H1 (cell line): ENCODE measurements at regions of chr22 and their contacts with region 1.

Region 1: DNA sequence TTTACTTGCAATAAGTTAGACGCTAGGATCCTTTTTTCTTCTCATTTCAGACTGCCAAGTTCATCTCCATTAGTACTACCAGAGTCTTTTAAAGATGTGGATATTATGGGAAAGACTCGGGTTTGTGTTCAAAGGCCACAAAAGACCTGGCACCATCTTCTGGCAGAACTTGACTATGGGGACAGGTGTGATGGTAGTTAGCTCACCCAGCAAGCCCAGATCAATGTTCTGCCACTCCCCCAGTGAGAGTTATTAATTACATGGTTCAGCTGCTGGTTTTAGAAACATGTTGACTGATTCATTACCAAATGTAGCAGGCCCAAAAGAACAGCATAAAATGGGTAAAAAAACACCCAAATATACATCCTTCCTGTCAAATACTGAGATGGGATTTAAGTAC is 333.5 kb upstream of the PITPNB start:
- DNase-seq: no peak
- H3K4me3 ChIP-seq: no peak overlapping the region
- H3K27ac ChIP-seq: no peak overlapping the region
- H3K4me1 ChIP-seq: no peaks in the 10 kb centered on the region
- H3K27me3 ChIP-seq: peaks cover 2 to 16% (median 8%) of the 10 kb centered on the region in 4 experiments
- CTCF ChIP-seq: no peak
- EP300 ChIP-seq: no peak
- POLR2A ChIP-seq: no peak
- RAD21 ChIP-seq: no peak

Region 2: DNA sequence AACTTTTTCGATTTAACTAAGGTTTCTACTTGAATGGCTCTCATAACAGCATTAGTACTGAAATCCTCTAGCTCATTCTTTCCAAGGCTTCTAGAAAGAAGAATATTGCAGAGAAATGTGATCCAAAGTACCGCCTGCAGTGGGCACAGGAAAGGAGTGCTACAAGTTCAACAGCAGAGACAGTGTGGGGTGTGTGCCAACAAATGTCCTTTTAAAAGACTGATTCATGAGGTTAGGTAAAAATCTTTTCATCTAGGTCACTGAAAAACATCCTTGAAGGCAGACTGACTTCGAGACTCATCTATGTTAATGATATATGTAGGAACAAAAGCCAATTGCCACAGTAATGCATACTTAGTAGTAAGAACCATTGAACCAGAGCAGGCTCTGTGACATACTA is 15.6 kb after region 1 on chr22:
- CTCF ChIA-PET with region 1: interaction called, 11 read pairs
- POLR2A ChIA-PET with region 1: interaction called, 3 read pairs
- DNase-seq: no peak
- H3K4me3 ChIP-seq: no peak overlapping the region
- H3K27ac ChIP-seq: no peak overlapping the region
- H3K4me1 ChIP-seq: 0 out of 7 replicates have a peak, but pooled peaks cover 0 to 2% (median 0%) of the 10 kb centered on the region in 4 experiments
- H3K27me3 ChIP-seq: no peaks in the 10 kb centered on the region
- CTCF ChIP-seq: no peak
- EP300 ChIP-seq: no peak
- POLR2A ChIP-seq: no peak
- RAD21 ChIP-seq: no peak

Region 3: DNA sequence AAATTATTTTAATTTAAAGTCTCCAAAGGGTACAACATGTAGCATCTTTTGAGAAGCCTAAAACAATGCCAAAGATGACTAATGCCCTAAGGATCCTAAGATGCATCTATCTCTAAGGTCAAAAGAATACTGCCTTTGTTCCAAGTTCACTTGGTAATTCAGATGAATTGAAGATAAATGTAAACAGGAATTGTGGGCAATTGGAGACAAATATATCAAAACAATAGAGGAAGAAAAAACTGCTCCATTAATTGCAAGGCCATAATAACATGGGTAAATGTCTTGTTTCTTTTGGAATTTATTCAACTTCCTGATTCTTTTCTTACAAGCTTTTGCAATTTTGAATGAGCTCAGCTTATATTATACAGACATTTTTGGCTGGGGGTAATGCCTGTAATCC is 88.5 kb after region 1 on chr22:
- CTCF ChIA-PET with region 1: no interaction called
- POLR2A ChIA-PET with region 1: no interaction called
- DNase-seq: no peak
- H3K4me3 ChIP-seq: no peak overlapping the region
- H3K27ac ChIP-seq: no peak overlapping the region
- H3K4me1 ChIP-seq: no peaks in the 10 kb centered on the region
- H3K27me3 ChIP-seq: no peaks in the 10 kb centered on the region
- CTCF ChIP-seq: no peak
- EP300 ChIP-seq: no peak
- POLR2A ChIP-seq: no peak
- RAD21 ChIP-seq: no peak

Region 4: DNA sequence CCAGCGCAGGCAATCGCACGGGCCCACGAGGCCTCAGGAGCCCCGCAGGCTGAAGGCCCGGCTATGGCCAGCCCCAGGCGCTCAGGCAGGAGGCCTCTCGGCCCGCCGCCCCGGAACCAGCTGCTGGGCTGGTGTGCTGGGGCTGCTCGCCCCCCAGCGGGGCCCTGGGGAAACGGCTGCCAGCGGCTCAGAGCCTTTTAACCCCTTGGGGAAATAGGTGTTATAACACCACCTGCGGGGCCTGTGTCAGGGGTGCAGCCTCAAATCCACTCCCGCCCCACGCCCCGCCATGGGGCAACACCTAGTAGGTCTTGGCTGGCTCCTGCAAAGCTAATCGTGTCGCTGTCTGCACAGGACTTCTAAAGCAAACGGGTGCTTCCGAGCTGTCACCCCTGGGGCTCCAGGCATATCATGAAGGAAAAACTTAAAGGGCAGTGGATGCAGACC is 189.7 kb after region 1 on chr22:
- CTCF ChIA-PET with region 1: interaction called, 10 read pairs
- POLR2A ChIA-PET with region 1: no interaction called
- DNase-seq: peak; percentile 69 to 85
- H3K4me3 ChIP-seq: peak overlapping the region; percentile 64 to 75 (median 72)
- H3K27ac ChIP-seq: no peak overlapping the region
- H3K4me1 ChIP-seq: peaks cover 0 to 3% (median 1%) of the 10 kb centered on the region in 4 experiments; a peak in 2 of 7 replicates
- H3K27me3 ChIP-seq: no peaks in the 10 kb centered on the region; a peak in 1 of 7 replicates
- CTCF ChIP-seq: peak; percentile 74 to 98 (median 77)
- EP300 ChIP-seq: peak in 1 of 2 experiments; percentile 38; a peak in 1 of 3 replicates
- POLR2A ChIP-seq: peak in 1 of 2 experiments; percentile 31; a peak in 1 of 3 replicates
- RAD21 ChIP-seq: peak; percentile 90 to 95

Region 5: DNA sequence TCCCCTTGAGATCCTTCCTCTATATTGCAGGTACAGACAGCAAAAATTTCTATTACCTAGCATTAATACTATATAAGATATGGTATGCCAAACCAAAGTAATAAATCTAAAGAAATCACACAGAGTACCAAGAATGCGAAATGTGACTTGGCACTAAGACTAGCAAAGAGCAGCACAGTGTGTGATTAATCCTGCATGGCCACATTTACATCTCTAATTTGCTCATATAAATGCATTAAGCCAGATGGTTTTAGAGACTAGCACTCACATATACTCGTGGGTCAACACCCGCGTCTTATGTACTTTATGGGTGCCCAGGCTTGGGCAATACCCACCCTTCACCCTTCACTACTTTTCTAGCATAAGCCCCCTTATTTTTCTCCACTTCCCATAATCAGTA is 213.9 kb after region 1 on chr22:
- CTCF ChIA-PET with region 1: no interaction called
- POLR2A ChIA-PET with region 1: no interaction called
- DNase-seq: no peak
- H3K4me3 ChIP-seq: no peak overlapping the region
- H3K27ac ChIP-seq: no peak overlapping the region
- H3K4me1 ChIP-seq: no peaks in the 10 kb centered on the region
- H3K27me3 ChIP-seq: no peaks in the 10 kb centered on the region
- CTCF ChIP-seq: no peak
- EP300 ChIP-seq: no peak
- POLR2A ChIP-seq: no peak
- RAD21 ChIP-seq: no peak